ENCODE measurements at regions of chr5 and their contacts with region 1.

Region 1: GRCh38 chr5:5141625-5142532 is 1.7 kb downstream of the ADAMTS16 start:
- DNase-seq: peak in 1 of 2 donors; percentile 77
- ATAC-seq: peak in 1 of 3 donors; percentile 40
- H3K4me3 ChIP-seq: no peak overlapping the region
- H3K4me3 Mint-ChIP-seq: no peak overlapping the region
- H3K27ac ChIP-seq: no peak overlapping the region
- H3K27ac Mint-ChIP-seq: no peak overlapping the region
- H3K4me1 ChIP-seq: no peaks in the 10 kb centered on the region
- H3K4me1 Mint-ChIP-seq: peaks cover 0 to 6% of the 10 kb centered on the region in 2 donors
- H3K27me3 ChIP-seq: peaks cover 8% of the 10 kb centered on the region
- H3K27me3 Mint-ChIP-seq: peaks cover 13 to 17% of the 10 kb centered on the region in 2 donors
- CTCF ChIP-seq: peak; percentile 86

Region 2: DNA sequence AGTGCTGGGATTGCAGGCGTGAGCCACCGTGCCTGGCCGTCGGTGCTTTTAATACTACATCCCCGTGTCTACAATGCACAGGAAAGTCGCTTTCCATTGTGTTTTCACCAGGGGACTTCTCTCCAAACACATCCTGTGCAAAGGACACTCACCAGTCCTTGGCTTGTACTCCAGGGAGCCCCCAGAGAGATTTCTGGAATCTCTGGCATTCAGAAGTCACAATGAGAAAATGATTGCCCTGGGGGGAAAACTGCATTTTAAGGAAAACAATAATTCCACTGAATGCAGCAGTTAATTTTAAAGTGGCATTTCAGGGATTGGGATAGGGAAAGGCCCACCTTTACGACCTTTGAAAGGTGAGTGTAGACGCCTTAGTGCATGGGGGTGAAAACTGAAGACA is 110.2 kb after region 1 on chr5:
- intact Hi-C with region 1: no loop called
- DNase-seq: no peak
- ATAC-seq: no peak
- H3K4me3 ChIP-seq: no peak overlapping the region
- H3K4me3 Mint-ChIP-seq: no peak overlapping the region
- H3K27ac ChIP-seq: no peak overlapping the region
- H3K27ac Mint-ChIP-seq: no peak overlapping the region
- H3K4me1 ChIP-seq: no peaks in the 10 kb centered on the region
- H3K4me1 Mint-ChIP-seq: no peaks in the 10 kb centered on the region
- H3K27me3 ChIP-seq: no peaks in the 10 kb centered on the region
- H3K27me3 Mint-ChIP-seq: no peaks in the 10 kb centered on the region
- CTCF ChIP-seq: no peak

Region 3: DNA sequence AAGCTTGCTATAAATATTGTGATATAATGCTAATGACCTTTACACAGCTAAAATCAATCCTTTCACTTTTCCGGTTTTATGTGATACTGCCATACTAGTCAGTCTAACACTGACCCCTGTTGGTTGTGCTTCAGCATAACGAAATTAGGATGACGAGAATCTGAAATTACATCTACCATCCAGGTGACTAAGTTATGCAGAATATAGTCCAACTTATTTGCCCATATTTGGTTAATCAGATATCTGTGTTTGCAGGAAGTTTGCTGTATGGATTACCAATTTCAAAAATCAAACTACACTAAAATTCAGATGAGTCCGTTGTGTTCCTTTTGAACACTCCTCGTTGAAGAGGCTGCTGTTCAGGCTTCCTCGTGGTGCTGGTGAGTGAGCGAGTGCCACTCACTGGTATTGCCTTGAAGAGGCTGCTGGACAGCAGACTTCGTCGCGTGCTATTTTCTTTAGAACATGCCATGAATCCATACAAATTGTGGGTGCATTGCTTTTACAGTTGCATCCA is 1603.9 kb after region 1 on chr5:
- intact Hi-C with region 1: loop called (anchors 10 kb)
- DNase-seq: peak in 1 of 2 donors; percentile 78
- ATAC-seq: peak; percentile 65 to 71 (median 67)
- H3K4me3 ChIP-seq: no peak overlapping the region
- H3K4me3 Mint-ChIP-seq: no peak overlapping the region
- H3K27ac ChIP-seq: no peak overlapping the region
- H3K27ac Mint-ChIP-seq: no peak overlapping the region
- H3K4me1 ChIP-seq: peaks cover 8% of the 10 kb centered on the region
- H3K4me1 Mint-ChIP-seq: peaks cover 4 to 6% of the 10 kb centered on the region in 2 donors
- H3K27me3 ChIP-seq: no peaks in the 10 kb centered on the region
- H3K27me3 Mint-ChIP-seq: no peaks in the 10 kb centered on the region
- CTCF ChIP-seq: peak; percentile 70

Measured in natural killer cell (primary cell).